ENCODE measurements at regions of chr16 and their contacts with region 1.

Region 1: GRCh38 chr16:84720177-84720579 is 20.4 kb downstream of the USP10 start:
- H3K4me3 ChIP-seq: no peak overlapping the region
- H3K27ac ChIP-seq: no peak overlapping the region
- H3K4me1 ChIP-seq: peaks cover 34% of the 10 kb centered on the region
- CTCF ChIP-seq: no peak

Region 2: DNA sequence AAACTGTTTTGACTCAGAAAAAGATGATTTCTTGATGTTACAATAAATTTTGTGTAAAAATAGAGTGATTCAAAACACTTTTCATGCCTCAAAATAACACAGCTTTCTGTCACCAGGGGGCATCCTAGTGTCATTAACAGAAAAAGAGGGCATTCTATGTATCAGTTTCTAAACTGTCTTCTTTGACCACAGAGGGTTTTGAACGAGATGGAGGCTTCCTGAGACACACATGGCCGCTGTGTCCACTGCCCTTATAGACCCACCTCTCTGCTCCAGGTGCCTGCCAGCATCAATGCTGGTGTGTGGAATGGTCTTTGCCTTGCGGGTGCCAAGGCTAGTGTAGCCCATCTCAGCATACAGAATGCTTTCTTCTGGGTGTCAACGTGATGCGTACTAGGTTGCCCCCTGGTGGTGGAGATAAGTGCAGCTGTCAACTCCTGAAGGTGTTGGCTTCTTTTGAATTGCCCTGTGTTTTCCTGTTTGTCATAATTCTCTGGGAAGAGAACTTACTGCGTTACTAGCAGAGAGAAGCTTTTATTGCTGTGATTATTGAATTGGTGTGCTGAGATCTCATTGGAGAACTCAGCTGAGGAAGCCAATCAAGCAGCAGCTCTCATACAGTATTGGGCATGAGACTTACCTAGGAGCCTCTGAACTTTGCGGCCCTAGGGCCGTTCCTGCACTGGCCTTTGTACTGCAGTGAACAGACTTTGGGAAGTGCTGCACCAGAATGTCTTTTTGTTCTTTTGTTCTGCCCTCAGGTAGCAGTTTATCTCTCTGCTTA is 18.3 kb after region 1 on chr16:
- CTCF ChIA-PET with region 1: interaction called, 112 read pairs
- POLR2A ChIA-PET with region 1: interaction called, 3 read pairs
- H3K4me3 ChIP-seq: no peak overlapping the region
- H3K27ac ChIP-seq: no peak overlapping the region
- H3K4me1 ChIP-seq: peaks cover 10% of the 10 kb centered on the region
- CTCF ChIP-seq: peak; percentile 73